ENCODE measurements at regions of chr6 and their contacts with region 1.

Region 1: DNA sequence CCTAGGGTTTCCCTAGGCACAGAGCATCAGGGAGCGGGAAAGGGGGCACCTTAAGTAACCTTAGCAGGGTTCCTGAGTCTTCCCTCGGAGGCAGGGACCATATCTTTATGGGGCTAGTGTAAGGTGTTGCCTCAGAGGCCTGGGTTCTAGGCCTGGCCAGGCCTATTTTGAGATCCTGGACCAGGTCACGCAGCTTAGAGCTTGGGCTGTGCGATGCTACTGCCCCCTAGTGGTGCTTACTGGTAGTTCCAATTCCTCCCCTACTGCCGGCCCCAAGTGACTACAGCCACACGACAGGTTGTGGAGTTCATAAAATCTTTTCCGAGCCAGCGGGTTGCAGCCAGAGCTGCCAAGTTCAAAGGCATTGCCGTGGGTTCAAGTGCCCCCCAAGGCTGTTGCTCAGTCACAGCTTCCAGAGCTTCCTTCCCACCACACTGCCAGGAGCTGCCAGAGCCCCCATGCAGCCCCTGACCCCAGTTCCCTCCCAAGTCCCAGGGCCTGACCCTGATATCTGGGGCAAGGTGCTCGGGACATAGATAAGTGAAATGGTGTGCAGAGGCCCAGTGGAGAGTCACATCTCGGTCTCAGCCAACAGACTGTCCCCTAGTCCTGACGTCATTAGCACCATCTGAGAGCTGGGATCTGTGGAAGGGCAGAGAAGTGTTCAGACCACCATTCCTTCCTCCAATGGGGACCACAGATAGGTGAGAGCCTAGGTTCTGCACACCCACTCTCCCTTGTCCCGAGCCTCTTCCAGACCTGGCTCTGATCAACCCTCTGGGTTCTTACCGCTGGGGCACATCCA is 3.3 kb downstream of the LRRC73 start:
- DNase-seq: peak; percentile 58 to 92 (median 74)
- ATAC-seq: peak; percentile 71
- H3K4me3 ChIP-seq: no peak overlapping the region
- H3K4me3 Mint-ChIP-seq: peak overlapping the region; percentile 68
- H3K27ac ChIP-seq: no peak overlapping the region
- H3K27ac Mint-ChIP-seq: no peak overlapping the region
- H3K4me1 ChIP-seq: peaks cover 29% of the 10 kb centered on the region
- H3K4me1 Mint-ChIP-seq: peaks cover 15% of the 10 kb centered on the region
- H3K27me3 ChIP-seq: peaks cover 20% of the 10 kb centered on the region in 2 experiments
- H3K27me3 Mint-ChIP-seq: peaks cover 23% of the 10 kb centered on the region
- CTCF ChIP-seq: peak; percentile 94

Region 2: GRCh38 chr6:42901536-42901957 is 605.3 kb before region 1 on chr6:
- CTCF ChIA-PET with region 1: no interaction called
- POLR2A ChIA-PET with region 1: no interaction called
- intact Hi-C with region 1: loop called in 1 of 2 experiments (anchors 10 kb)
- DNase-seq: peak; percentile 43 to 90 (median 60)
- ATAC-seq: peak; percentile 97
- H3K4me3 ChIP-seq: no peak overlapping the region
- H3K4me3 Mint-ChIP-seq: no peak overlapping the region
- H3K27ac ChIP-seq: no peak overlapping the region
- H3K27ac Mint-ChIP-seq: no peak overlapping the region
- H3K4me1 ChIP-seq: peaks cover 7% of the 10 kb centered on the region
- H3K4me1 Mint-ChIP-seq: peaks cover 11% of the 10 kb centered on the region
- H3K27me3 ChIP-seq: no peaks in the 10 kb centered on the region
- H3K27me3 Mint-ChIP-seq: no peaks in the 10 kb centered on the region
- CTCF ChIP-seq: peak; percentile 91

Region 3: GRCh38 chr6:43263314-43264178 is 243.3 kb before region 1 on chr6:
- CTCF ChIA-PET with region 1: interaction called, 11 read pairs
- POLR2A ChIA-PET with region 1: no interaction called
- intact Hi-C with region 1: loop called (anchors 1 kb)
- DNase-seq: peak; percentile 62 to 85 (median 73)
- ATAC-seq: peak; percentile 96
- H3K4me3 ChIP-seq: no peak overlapping the region
- H3K4me3 Mint-ChIP-seq: no peak overlapping the region
- H3K27ac ChIP-seq: no peak overlapping the region
- H3K27ac Mint-ChIP-seq: no peak overlapping the region
- H3K4me1 ChIP-seq: peaks cover 3% of the 10 kb centered on the region
- H3K4me1 Mint-ChIP-seq: no peaks in the 10 kb centered on the region
- H3K27me3 ChIP-seq: peaks cover 0 to 2% of the 10 kb centered on the region in 2 experiments
- H3K27me3 Mint-ChIP-seq: no peaks in the 10 kb centered on the region
- CTCF ChIP-seq: peak; percentile 72

Region 4: GRCh38 chr6:43347021-43347420 is 159.8 kb before region 1 on chr6:
- CTCF ChIA-PET with region 1: no interaction called
- POLR2A ChIA-PET with region 1: no interaction called
- intact Hi-C with region 1: no loop called
- DNase-seq: no peak
- ATAC-seq: no peak
- H3K4me3 ChIP-seq: no peak overlapping the region
- H3K4me3 Mint-ChIP-seq: no peak overlapping the region
- H3K27ac ChIP-seq: no peak overlapping the region
- H3K27ac Mint-ChIP-seq: no peak overlapping the region
- H3K4me1 ChIP-seq: no peaks in the 10 kb centered on the region
- H3K4me1 Mint-ChIP-seq: no peaks in the 10 kb centered on the region
- H3K27me3 ChIP-seq: no peaks in the 10 kb centered on the region
- H3K27me3 Mint-ChIP-seq: no peaks in the 10 kb centered on the region
- CTCF ChIP-seq: no peak

Region 5: GRCh38 chr6:43386492-43386891 is 120.4 kb before region 1 on chr6:
- CTCF ChIA-PET with region 1: interaction called, 3 read pairs
- POLR2A ChIA-PET with region 1: interaction called, 3 read pairs
- intact Hi-C with region 1: loop called (anchors 5 kb)
- DNase-seq: peak in 3 of 14 experiments; percentile 44 to 57 (median 50)
- ATAC-seq: no peak
- H3K4me3 ChIP-seq: no peak overlapping the region
- H3K4me3 Mint-ChIP-seq: peak overlapping the region; percentile 22
- H3K27ac ChIP-seq: no peak overlapping the region
- H3K27ac Mint-ChIP-seq: peak overlapping the region; percentile 93
- H3K4me1 ChIP-seq: peaks cover 55% of the 10 kb centered on the region
- H3K4me1 Mint-ChIP-seq: peaks cover 75% of the 10 kb centered on the region
- H3K27me3 ChIP-seq: no peaks in the 10 kb centered on the region
- H3K27me3 Mint-ChIP-seq: no peaks in the 10 kb centered on the region
- CTCF ChIP-seq: peak; percentile 54

Region 6: GRCh38 chr6:43468748-43469681 is 37.9 kb before region 1 on chr6:
- CTCF ChIA-PET with region 1: no interaction called
- POLR2A ChIA-PET with region 1: no interaction called
- intact Hi-C with region 1: no loop called
- DNase-seq: no peak
- ATAC-seq: no peak
- H3K4me3 ChIP-seq: no peak overlapping the region
- H3K4me3 Mint-ChIP-seq: no peak overlapping the region
- H3K27ac ChIP-seq: no peak overlapping the region
- H3K27ac Mint-ChIP-seq: no peak overlapping the region
- H3K4me1 ChIP-seq: no peaks in the 10 kb centered on the region
- H3K4me1 Mint-ChIP-seq: no peaks in the 10 kb centered on the region
- H3K27me3 ChIP-seq: peaks cover 7 to 11% of the 10 kb centered on the region in 2 experiments
- H3K27me3 Mint-ChIP-seq: peaks cover 37% of the 10 kb centered on the region
- CTCF ChIP-seq: no peak

Region 7: DNA sequence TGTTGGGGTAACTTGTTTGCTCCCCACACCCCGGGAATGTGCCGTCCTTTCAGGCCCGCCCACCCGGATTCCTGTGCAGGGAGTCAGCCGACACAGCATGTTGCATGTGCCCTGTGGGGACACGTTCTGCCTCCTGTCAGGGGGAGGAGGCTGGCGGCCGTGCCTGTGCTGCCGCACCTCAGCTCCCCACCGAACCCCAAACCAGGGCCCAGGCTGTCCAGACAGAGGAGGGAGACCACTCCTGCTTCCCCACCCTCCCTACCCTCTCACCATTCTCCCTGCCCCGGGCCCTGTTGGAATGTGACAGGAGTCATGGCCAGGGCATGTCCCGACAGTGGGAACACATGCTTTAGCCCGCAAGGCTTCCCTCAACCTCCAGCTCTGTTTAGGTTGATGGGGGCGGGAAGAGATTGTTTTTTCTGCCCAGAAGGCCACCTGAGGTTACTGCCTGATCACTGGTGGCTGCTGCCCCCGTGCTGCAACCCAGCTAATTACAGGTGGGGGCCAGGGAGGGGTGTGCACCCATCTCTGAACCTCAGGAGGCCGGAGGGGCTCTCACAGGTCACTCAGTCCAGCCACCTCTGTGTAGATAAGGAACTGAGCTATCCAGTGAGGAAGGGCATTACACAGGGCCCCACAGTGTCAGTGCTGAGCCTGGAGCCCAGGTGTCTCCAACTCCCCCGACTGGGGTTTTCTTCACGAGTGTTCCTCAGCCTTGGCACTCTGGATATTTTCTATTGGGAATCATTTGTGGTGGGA is 10.3 kb before region 1 on chr6:
- CTCF ChIA-PET with region 1: interaction called, 6 read pairs
- POLR2A ChIA-PET with region 1: interaction called, 10 read pairs
- intact Hi-C with region 1: no loop called
- DNase-seq: peak in 2 of 14 experiments; percentile 36 to 45
- ATAC-seq: peak; percentile 53
- H3K4me3 ChIP-seq: no peak overlapping the region
- H3K4me3 Mint-ChIP-seq: no peak overlapping the region
- H3K27ac ChIP-seq: no peak overlapping the region
- H3K27ac Mint-ChIP-seq: no peak overlapping the region
- H3K4me1 ChIP-seq: peaks cover 27% of the 10 kb centered on the region
- H3K4me1 Mint-ChIP-seq: peaks cover 36% of the 10 kb centered on the region
- H3K27me3 ChIP-seq: no peaks in the 10 kb centered on the region
- H3K27me3 Mint-ChIP-seq: no peaks in the 10 kb centered on the region
- CTCF ChIP-seq: no peak

Measured in CD4-positive, alpha-beta T cell (primary cell).